ENCODE measurements at regions of chr9 and their contacts with region 1.

Region 1: DNA sequence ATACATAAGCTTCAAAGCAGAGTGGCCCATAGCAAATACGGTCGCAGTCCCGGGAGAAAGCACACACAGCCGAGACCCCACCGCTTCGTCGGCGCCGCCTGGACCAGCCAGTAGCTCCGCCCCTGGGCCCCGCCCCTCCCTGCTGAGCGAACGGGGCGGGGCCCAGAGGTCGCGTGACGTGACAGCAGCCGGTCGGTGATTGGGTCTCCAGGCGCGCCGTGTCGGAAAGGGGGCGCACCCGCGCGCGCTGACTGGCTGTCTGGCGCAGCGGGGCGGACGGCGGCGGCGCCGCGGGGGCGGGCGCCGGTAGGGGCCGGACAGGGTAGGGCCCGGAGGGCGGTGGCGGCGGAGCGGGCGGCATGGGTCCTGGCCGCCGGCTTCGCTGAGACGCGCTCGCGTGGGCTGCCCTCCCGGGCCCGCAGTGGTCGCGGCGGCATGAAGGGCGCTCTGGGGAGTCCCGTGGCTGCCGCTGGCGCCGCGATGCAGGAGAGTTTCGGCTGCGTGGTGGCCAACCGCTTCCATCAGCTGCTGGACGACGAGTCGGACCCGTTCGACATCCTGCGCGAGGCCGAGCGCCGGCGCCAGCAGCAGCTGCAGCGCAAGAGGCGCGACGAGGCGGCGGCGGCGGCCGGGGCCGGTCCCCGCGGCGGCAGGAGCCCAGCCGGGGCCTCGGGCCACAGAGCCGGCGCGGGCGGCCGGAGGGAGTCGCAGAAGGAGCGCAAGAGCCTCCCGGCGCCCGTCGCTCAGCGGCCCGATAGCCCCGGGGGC is at the start of gene HABP4:
- DNase-seq: peak; percentile 99
- ATAC-seq: peak; percentile 100
- total RNA-seq, gene HABP4: 25.8 TPM

Region 2: DNA sequence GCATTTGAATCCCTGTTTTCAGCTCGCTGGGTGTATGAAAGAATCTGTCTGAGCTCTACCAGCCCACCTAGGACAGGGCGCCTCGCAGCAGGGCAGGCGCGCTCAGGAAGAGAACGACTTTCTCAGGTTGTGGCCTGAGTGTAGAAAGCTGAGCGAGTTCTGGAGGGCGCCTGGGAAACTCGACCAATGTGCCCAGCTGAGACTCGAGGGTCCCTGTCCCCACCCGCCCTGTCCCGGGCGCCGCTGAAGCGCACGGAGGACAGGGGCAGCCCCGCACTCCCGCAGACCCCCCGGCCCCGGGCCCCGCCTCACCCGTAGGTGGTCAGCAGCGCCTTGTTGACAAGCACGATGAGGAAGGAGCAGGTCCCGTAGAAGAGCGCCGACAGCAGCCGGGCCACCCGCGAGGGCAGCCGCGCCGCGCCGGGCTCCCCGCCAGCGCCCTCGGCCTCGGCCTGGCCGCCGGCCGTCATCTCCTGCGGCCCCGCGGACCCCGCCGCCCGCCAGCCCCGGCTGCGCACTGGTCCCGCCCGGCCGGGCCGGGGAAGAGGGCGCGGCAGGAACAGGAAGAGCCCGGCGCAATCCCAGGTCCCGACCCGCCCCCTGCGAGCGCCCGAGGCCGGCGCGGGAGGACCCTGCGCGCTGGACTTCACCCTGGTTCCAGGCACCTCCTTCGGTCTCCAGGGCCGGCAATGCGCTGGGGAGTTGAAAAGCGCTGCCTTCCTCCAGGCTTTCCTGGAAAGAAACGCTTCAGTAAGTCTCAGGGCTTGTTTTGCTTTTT is 66.7 kb before region 1 on chr9 and contains the start of gene SLC35D2:
- intact Hi-C with region 1: loop called (anchors 5 kb)
- DNase-seq: peak; percentile 84
- ATAC-seq: peak; percentile 96
- total RNA-seq, gene SLC35D2: 14.7 TPM

Region 3: GRCh38 chr9:96418074-96418809 is 31.8 kb before region 1 on chr9 and contains the start of gene ZNF367:
- intact Hi-C with region 1: loop called (anchors 2 kb)
- DNase-seq: peak; percentile 99
- ATAC-seq: peak; percentile 93
- total RNA-seq, gene ZNF367: 4.3 TPM

Region 4: DNA sequence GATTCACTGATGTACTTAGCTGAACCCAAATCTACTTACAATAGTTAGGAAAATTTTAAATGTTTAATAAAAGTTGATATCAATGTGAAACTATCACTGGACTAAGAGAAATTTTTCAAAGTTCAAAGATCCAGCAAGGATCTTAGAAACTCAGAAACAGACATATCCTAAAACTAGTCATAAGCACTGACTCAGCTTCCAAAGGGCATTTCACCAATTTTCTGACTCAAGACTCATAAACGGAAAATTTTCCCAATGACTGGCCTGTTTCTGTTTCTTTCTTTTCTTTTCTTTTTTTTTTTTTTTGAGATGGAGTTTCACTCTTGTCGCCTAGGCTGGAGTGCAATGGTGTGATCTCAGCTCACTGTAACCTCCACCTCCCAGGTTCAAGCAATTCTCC is 103.0 kb after region 1 on chr9:
- intact Hi-C with region 1: loop called (anchors 10 kb)
- DNase-seq: no peak
- ATAC-seq: no peak

Region 5: GRCh38 chr9:96619491-96620154 is 169.6 kb after region 1 on chr9 and contains the start of gene CDC14B:
- intact Hi-C with region 1: loop called (anchors 2 kb)
- DNase-seq: peak; percentile 95
- ATAC-seq: peak; percentile 82
- total RNA-seq, gene CDC14B: 14.5 TPM

Region 6: GRCh38 chr9:96654443-96655197 is 204.6 kb after region 1 on chr9:
- intact Hi-C with region 1: loop called (anchors 2 kb)
- DNase-seq: peak; percentile 93
- ATAC-seq: peak; percentile 90